Common myeloid progenitor, CD34-positive (primary cell): ENCODE measurements at regions of chr16 and their contacts with region 1.

Region 1: DNA sequence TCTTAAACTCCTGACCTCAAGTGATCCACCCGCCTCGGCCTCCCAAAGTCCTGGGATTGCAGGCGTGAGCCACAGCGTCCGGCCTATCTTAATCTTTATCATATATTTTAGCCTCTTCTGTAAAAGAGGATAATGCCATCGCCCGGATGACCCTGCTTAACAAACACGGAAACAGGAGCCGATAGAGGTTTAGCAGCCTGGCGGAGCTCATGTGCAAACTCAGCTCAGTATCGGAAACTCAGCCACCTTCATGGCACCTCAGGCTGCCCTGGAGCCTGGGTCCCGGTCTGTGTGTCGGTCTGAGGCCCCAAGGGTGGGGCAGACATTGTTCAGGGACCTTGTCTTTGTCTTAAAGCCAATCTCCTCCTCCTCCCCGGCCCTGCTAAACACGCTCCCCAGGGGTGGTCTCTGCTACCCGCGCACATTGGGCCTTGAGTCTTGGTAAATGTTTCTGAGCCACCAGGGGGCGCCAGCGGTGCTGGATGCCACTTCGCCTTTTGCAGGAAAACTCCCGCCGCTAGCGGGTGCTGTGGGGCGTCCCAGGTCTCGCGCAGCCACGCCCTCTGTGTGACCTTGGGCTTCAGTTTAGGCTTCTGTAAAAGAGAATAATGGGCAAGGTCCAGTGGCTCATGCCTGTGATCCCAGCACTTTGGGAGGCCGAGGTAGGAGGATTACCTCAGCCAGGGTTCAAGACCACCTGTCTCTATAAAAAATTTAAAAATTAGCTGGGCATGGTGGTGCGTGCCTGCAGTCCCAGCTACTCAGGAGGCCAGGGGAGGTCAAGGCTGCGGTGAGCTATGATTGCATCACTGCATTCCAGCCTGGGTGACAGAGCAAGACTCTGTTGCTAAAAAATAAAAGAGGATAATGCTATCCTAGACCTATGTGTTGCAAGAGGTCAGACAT is 2.7 kb downstream of the CETP start:
- DNase-seq: peak; percentile 89 to 93 (median 92)
- H3K4me3 ChIP-seq: no peak overlapping the region
- H3K27ac ChIP-seq: no peak overlapping the region
- H3K4me1 ChIP-seq: peaks cover 2 to 28% (median 12%) of the 10 kb centered on the region in 4 experiments
- H3K27me3 ChIP-seq: no peaks in the 10 kb centered on the region

Region 2: DNA sequence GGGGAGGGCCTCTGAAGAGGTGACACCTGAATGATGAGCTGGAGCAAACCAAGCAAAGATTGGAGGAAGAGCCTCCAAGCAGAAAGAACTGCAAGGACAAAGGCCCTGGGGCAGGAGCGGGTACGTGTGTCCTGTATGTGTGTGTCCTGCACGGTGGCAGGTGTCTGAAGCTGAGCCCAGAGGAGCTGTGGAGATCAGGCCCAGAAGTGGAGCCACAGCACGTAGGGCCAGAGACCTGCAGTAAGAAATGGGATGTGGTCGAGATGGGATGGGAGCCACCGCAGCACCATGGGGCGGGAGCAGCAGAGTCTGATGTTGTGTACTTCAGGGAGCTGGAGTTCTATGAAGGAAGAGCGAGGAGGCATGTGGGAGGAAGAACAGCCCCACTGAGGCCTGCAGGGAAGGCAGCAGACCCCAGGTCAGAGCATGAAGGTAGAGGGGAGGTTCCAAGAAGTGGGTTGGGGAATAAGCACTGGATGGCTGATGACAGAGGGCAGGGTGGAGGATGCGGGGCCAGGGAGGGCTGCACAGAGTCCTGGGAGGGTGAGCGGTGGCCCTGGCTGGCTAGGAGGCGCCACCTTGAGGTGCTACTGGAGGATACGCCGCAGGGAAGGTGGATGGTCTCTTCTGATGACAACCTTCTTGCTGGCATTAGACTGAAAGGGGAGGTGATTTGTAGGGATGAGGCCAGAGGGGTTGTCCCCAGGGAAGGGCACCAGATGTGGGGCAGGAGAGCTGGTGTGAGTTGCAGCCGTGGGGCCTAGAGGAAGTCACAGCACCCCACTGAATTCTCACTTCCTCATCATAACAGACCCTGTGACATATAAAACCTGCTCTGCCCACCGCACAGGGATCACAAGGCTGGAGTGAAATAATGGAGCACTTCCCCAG is 13.4 kb before region 1 on chr16:
- CTCF ChIA-PET with region 1: interaction called, 57 read pairs
- POLR2A ChIA-PET with region 1: no interaction called
- DNase-seq: peak; percentile 51 to 81 (median 80)
- H3K4me3 ChIP-seq: peak overlapping the region in 1 of 7 experiments; percentile 12
- H3K27ac ChIP-seq: no peak overlapping the region
- H3K4me1 ChIP-seq: peaks cover 0 to 14% (median 6%) of the 10 kb centered on the region in 4 experiments
- H3K27me3 ChIP-seq: no peaks in the 10 kb centered on the region

Region 3: GRCh38 chr16:56988948-56989945 is 24.8 kb after region 1 on chr16 and contains the start of gene NLRC5:
- CTCF ChIA-PET with region 1: interaction called, 19 read pairs
- POLR2A ChIA-PET with region 1: interaction called, 3 read pairs
- DNase-seq: peak; percentile 83 to 94 (median 92)
- H3K4me3 ChIP-seq: peak within 1 kb of the TSS; percentile 58 to 95 (median 83)
- H3K27ac ChIP-seq: peak within 1 kb of the TSS; percentile 66 to 68
- H3K4me1 ChIP-seq: peaks cover 5 to 30% (median 26%) of the 10 kb centered on the region in 4 experiments
- H3K27me3 ChIP-seq: no peaks in the 10 kb centered on the region

Region 4: DNA sequence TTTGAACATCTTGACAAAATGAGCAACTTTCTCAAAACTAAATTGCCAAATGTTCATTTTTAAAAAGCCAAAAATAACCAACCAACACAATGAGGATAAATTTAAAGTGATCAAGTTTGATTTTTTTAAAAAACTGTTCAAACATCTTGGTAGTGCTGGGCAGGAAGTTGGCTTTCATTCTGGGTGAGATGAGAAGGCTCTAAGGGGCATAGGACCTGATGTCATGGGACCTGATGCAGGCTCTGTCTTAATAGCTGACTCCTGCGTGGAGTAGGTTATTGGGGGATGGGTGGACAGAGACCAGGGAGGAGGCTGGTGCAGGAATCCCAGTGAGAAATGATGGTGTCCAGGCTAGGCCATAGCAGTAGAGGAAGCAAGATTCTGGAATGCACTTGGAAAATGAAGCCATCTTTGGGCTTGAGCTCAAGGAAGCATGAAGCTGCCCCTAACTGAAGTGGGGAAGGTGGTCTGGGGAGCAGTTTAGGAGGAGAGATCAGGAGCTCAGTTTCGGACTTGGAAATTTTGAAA is 45.2 kb after region 1 on chr16:
- CTCF ChIA-PET with region 1: no interaction called
- POLR2A ChIA-PET with region 1: no interaction called
- DNase-seq: no peak
- H3K4me3 ChIP-seq: no peak overlapping the region
- H3K27ac ChIP-seq: no peak overlapping the region
- H3K4me1 ChIP-seq: no peaks in the 10 kb centered on the region
- H3K27me3 ChIP-seq: no peaks in the 10 kb centered on the region

Region 5: GRCh38 chr16:57045694-57046381 is 81.3 kb after region 1 on chr16:
- CTCF ChIA-PET with region 1: interaction called, 61 read pairs
- POLR2A ChIA-PET with region 1: no interaction called
- DNase-seq: peak; percentile 59 to 81 (median 76)
- H3K4me3 ChIP-seq: peak overlapping the region in 1 of 7 experiments; percentile 8
- H3K27ac ChIP-seq: no peak overlapping the region
- H3K4me1 ChIP-seq: peaks cover 2 to 33% (median 21%) of the 10 kb centered on the region in 4 experiments
- H3K27me3 ChIP-seq: no peaks in the 10 kb centered on the region